Vagina (tissue), 2 donors: ENCODE measurements at regions of chr12 and their contacts with region 1.

Region 1: GRCh38 chr12:113271853-113272561 is 50.7 kb downstream of the TPCN1 start:
- DNase-seq: peak in 1 of 2 donors; percentile 96
- H3K4me3 ChIP-seq: no peak overlapping the region
- H3K27ac ChIP-seq: peak overlapping the region; percentile 84
- H3K4me1 ChIP-seq: peaks cover 25% of the 10 kb centered on the region
- H3K27me3 ChIP-seq: no peaks in the 10 kb centered on the region
- CTCF ChIP-seq: no peak
- POLR2A ChIP-seq: no peak

Region 2: DNA sequence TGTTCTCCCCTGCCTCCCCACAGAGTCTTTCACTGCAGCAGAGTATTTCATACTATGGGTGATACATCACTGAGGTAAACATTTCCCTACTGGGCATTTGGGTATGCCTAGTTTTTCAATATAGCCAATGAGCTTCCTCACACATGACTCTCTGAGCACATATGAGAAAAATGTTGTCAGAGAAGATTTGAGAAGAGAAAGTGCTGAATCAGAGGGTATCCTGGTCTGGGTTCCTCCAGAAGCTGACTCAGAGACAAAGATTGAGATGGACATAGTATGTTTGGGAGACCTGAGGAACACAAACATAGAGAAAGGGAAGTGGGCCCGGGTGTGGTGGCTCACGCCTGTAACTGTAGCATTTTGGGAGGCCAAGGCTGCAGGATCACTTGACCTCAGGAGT is 50.3 kb after region 1 on chr12:
- intact Hi-C with region 1: no loop called
- DNase-seq: no peak
- H3K4me3 ChIP-seq: no peak overlapping the region
- H3K27ac ChIP-seq: no peak overlapping the region
- H3K4me1 ChIP-seq: peaks cover 19% of the 10 kb centered on the region
- H3K27me3 ChIP-seq: no peaks in the 10 kb centered on the region
- CTCF ChIP-seq: no peak
- POLR2A ChIP-seq: no peak

Region 3: DNA sequence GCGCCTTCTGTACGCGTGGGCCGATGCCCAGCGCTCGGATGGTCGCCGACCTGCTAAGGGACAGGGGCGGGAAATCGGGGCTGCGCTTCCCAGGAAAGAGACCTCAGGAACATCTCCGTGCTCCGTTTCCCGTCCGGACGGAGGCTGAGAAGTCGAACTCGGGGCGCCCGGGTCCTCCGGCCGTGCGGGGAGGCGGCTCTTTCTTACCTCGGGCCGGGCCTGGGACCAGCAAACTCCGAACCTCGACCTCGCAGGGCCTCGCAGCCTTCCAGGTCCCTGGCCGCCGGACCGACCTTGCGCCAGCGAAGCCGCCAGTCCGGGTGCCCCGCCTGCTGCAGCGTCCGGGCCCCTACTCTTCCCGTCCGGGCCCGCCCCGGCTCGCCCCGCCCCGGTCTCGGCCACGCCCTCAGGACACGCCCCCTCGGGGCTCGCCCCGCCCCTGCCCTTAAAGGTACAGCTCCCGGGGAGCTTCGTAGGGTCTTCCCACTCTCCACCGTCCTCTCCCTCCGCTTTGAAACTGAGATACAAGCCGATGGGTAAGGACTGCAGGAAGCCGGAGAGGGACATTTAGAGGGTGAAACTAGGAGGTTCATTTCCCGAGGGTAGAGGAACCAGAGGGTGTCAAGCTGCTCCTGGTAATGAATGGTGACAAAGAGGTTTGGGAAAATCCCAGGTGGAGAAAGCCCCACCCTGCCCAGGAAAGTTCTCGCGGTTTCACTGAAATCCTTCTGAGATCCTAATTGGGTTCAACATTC is 63.0 kb after region 1 on chr12 and contains the start of gene SLC8B1:
- intact Hi-C with region 1: loop called (anchors 5 kb)
- DNase-seq: peak in 1 of 2 donors; percentile 90
- H3K4me3 ChIP-seq: peak within 1 kb of the TSS; percentile 84
- H3K27ac ChIP-seq: peak within 1 kb of the TSS; percentile 72
- H3K4me1 ChIP-seq: peaks cover 27% of the 10 kb centered on the region
- H3K27me3 ChIP-seq: no peaks in the 10 kb centered on the region
- CTCF ChIP-seq: no peak
- POLR2A ChIP-seq: peak; percentile 45 to 88
- total RNA-seq, gene SLC8B1: 42.2 TPM